ENCODE measurements at regions of chr2 and their contacts with region 1.

Region 1: GRCh38 chr2:151409601-151410484 is at the start of gene RIF1:
- DNase-seq: peak; percentile 47 to 83 (median 70)
- ATAC-seq: peak; percentile 91 to 93 (median 92)
- H3K4me3 ChIP-seq: peak within 1 kb of the TSS; percentile 94 to 96
- H3K4me3 Mint-ChIP-seq: peak within 1 kb of the TSS; percentile 94 to 97 (median 97)
- H3K27ac ChIP-seq: peak within 1 kb of the TSS; percentile 88
- H3K27ac Mint-ChIP-seq: peak within 1 kb of the TSS; percentile 90 to 92
- H3K4me1 ChIP-seq: peaks cover 11 to 13% of the 10 kb centered on the region in 2 experiments
- H3K4me1 Mint-ChIP-seq: peaks cover 31 to 36% (median 35%) of the 10 kb centered on the region in 3 donors
- H3K27me3 ChIP-seq: no peaks in the 10 kb centered on the region
- H3K27me3 Mint-ChIP-seq: peaks cover 0 to 1% of the 10 kb centered on the region in 2 donors
- total RNA-seq, gene RIF1: 46.6 to 68.3 (median 58.3) TPM

Region 2: GRCh38 chr2:149587220-149587949 is 1822.5 kb before region 1 on chr2 and contains the start of gene MMADHC:
- CTCF ChIA-PET with region 1: interaction called in 1 of 2 experiments, 16 read pairs
- POLR2A ChIA-PET with region 1: no interaction called
- DNase-seq: peak; percentile 80 to 97 (median 91)
- ATAC-seq: peak; percentile 97 to 98 (median 98)
- H3K4me3 ChIP-seq: peak within 1 kb of the TSS; percentile 97 to 100
- H3K4me3 Mint-ChIP-seq: peak within 1 kb of the TSS; percentile 96 to 99 (median 99)
- H3K27ac ChIP-seq: peak within 1 kb of the TSS; percentile 96
- H3K27ac Mint-ChIP-seq: peak within 1 kb of the TSS; percentile 96 to 99
- H3K4me1 ChIP-seq: peaks cover 8 to 27% of the 10 kb centered on the region in 2 experiments
- H3K4me1 Mint-ChIP-seq: peaks cover 44 to 57% (median 50%) of the 10 kb centered on the region in 3 donors
- H3K27me3 ChIP-seq: no peaks in the 10 kb centered on the region
- H3K27me3 Mint-ChIP-seq: peaks cover 18 to 23% of the 10 kb centered on the region in 2 donors
- total RNA-seq, gene MMADHC: 56.8 to 65.0 (median 61.4) TPM

Region 3: GRCh38 chr2:151085181-151085611 is 324.6 kb before region 1 on chr2:
- CTCF ChIA-PET with region 1: no interaction called
- POLR2A ChIA-PET with region 1: no interaction called
- DNase-seq: no peak
- ATAC-seq: no peak
- H3K4me3 ChIP-seq: no peak overlapping the region
- H3K4me3 Mint-ChIP-seq: no peak overlapping the region
- H3K27ac ChIP-seq: no peak overlapping the region
- H3K27ac Mint-ChIP-seq: no peak overlapping the region
- H3K4me1 ChIP-seq: peaks cover 3 to 5% of the 10 kb centered on the region in 2 experiments
- H3K4me1 Mint-ChIP-seq: peaks cover 0 to 35% (median 20%) of the 10 kb centered on the region in 3 donors
- H3K27me3 ChIP-seq: no peaks in the 10 kb centered on the region
- H3K27me3 Mint-ChIP-seq: peaks cover under 1 to 4% of the 10 kb centered on the region in 2 donors

Region 4: GRCh38 chr2:151119374-151119773 is 290.5 kb before region 1 on chr2:
- CTCF ChIA-PET with region 1: interaction called in 1 of 2 experiments, 13 read pairs
- POLR2A ChIA-PET with region 1: no interaction called
- DNase-seq: no peak
- ATAC-seq: no peak
- H3K4me3 ChIP-seq: no peak overlapping the region
- H3K4me3 Mint-ChIP-seq: no peak overlapping the region
- H3K27ac ChIP-seq: no peak overlapping the region
- H3K27ac Mint-ChIP-seq: no peak overlapping the region
- H3K4me1 ChIP-seq: no peaks in the 10 kb centered on the region
- H3K4me1 Mint-ChIP-seq: no peaks in the 10 kb centered on the region
- H3K27me3 ChIP-seq: no peaks in the 10 kb centered on the region
- H3K27me3 Mint-ChIP-seq: peaks cover 4 to 12% of the 10 kb centered on the region in 2 donors

Region 5: GRCh38 chr2:152497481-152498052 is 1087.7 kb after region 1 on chr2:
- CTCF ChIA-PET with region 1: no interaction called
- POLR2A ChIA-PET with region 1: no interaction called
- DNase-seq: no peak
- ATAC-seq: no peak
- H3K4me3 ChIP-seq: no peak overlapping the region
- H3K4me3 Mint-ChIP-seq: no peak overlapping the region
- H3K27ac ChIP-seq: no peak overlapping the region
- H3K27ac Mint-ChIP-seq: no peak overlapping the region
- H3K4me1 ChIP-seq: no peaks in the 10 kb centered on the region
- H3K4me1 Mint-ChIP-seq: no peaks in the 10 kb centered on the region
- H3K27me3 ChIP-seq: peaks cover 0 to 2% of the 10 kb centered on the region in 2 experiments
- H3K27me3 Mint-ChIP-seq: peaks cover 11 to 13% of the 10 kb centered on the region in 2 donors

Measured in T-cell (primary cell).